Calu3 (cell line): ENCODE measurements at regions of chr4 and their contacts with region 1.

Region 1: GRCh38 chr4:84146300-84146959 is 352.7 kb downstream of the NKX6-1 start:
- DNase-seq: no peak
- H3K4me3 Mint-ChIP-seq: no peak overlapping the region
- H3K27ac Mint-ChIP-seq: no peak overlapping the region
- H3K4me1 Mint-ChIP-seq: no peaks in the 10 kb centered on the region
- H3K27me3 Mint-ChIP-seq: no peaks in the 10 kb centered on the region
- CTCF ChIP-seq: no peak

Region 2: GRCh38 chr4:83771113-83771705 is 375.2 kb before region 1 on chr4:
- CTCF ChIA-PET with region 1: no interaction called
- intact Hi-C with region 1: loop called (anchors 10 kb)
- DNase-seq: peak; percentile 38
- H3K4me3 Mint-ChIP-seq: no peak overlapping the region
- H3K27ac Mint-ChIP-seq: no peak overlapping the region
- H3K4me1 Mint-ChIP-seq: no peaks in the 10 kb centered on the region
- H3K27me3 Mint-ChIP-seq: no peaks in the 10 kb centered on the region
- CTCF ChIP-seq: peak; percentile 46

Region 3: GRCh38 chr4:84249521-84249920 is 103.1 kb after region 1 on chr4:
- CTCF ChIA-PET with region 1: no interaction called
- intact Hi-C with region 1: no loop called
- DNase-seq: no peak
- H3K4me3 Mint-ChIP-seq: no peak overlapping the region
- H3K27ac Mint-ChIP-seq: no peak overlapping the region
- H3K4me1 Mint-ChIP-seq: no peaks in the 10 kb centered on the region
- H3K27me3 Mint-ChIP-seq: peaks cover 17% of the 10 kb centered on the region
- CTCF ChIP-seq: no peak

Region 4: DNA sequence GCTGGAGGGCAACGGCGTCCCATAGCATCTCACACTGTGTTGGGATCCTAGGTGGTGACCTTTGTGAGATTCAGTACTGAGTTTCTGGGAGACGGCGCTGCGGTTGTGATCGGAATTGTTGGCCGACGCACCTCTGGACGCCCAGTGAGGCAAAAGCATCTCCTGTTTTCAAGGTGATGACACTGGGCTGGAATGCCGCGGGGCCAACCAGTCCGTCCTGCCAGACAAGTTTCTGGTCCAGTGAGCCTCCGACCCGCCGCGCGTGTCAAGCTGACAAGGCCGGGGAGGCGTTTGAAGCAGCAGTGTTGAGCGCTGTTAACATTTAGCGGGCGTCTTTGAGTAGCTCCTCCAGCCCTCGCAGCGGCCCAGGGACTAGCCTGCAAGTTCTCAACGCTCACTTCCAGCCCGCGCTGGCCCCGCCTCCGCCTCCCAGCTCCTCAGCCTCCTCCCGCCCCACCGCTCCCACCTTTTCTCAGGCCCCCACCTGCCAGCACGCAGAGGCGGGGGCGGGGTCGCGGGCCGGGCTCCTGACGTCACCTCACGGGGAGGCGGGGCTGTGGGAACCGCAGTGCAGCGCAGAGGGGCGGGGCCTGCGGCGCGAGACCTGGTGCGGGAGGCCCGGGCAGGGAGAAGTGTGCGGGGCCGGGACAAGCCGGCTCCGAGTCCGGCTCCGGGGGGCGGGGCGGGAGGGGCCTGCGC is 436.0 kb after region 1 on chr4:
- CTCF ChIA-PET with region 1: no interaction called
- intact Hi-C with region 1: no loop called
- DNase-seq: peak; percentile 96
- H3K4me3 Mint-ChIP-seq: peak overlapping the region; percentile 86
- H3K27ac Mint-ChIP-seq: peak overlapping the region; percentile 71
- H3K4me1 Mint-ChIP-seq: peaks cover 33% of the 10 kb centered on the region
- H3K27me3 Mint-ChIP-seq: no peaks in the 10 kb centered on the region
- CTCF ChIP-seq: no peak